ENCODE measurements at regions of chrX and their contacts with region 1.

Region 1: DNA sequence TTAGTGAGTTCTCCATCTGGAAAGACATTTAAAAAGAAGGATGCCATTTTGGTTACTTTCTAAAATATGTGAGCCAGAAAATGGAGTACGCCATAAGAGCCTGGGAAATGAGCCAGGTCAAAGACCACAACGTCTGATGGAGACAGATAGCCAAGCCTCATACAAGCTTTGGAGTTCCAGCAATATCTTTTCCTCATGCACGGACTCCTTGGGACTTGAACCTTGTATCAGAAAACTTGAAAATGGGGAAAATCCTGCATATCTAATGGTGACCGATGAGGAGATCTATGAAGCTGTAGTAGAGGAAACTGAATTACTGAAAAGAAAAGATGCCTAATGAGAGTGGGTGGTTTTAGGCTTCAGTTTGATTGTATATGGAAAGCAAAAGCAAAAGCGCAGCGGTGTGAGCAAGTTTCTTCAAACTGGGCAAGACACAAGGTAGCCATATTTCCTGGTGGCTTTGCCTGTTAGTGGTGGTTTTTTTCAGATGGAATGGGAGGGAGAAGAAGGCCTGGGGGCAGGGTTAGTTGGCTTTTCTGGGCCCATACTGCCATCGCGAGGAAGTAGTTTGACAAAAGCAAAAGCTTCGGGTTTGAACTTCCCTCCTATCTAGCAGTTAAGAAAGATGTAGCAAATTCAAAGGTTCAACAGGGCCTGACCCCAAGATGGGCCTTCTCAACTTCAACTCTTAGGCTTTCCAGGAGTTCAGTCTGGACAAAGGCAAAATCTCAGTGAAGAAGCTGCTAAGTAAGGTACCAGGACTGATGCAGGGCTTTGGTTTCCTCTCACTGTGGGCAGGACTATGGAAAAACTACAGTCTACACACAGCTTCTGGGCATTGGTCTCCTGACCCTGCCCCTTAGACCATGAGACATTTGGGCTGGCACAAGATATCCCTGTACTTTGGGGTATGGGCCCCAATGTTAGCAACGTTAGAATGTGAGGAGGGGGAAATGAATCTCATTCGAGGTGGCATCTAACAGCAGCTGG is 210.0 kb upstream of the STK26 start:
- DNase-seq: peak; percentile 22 to 71 (median 46)
- ATAC-seq: peak; percentile 91
- H3K4me3 ChIP-seq: peak overlapping the region; percentile 14; the same call in 1 of the 2 replicates
- H3K27ac ChIP-seq: peak overlapping the region; percentile 82
- H3K4me1 ChIP-seq: peaks cover 0 to 8% of the 10 kb centered on the region in 2 experiments; a peak in 2 of 5 replicates
- H3K27me3 ChIP-seq: no peaks in the 10 kb centered on the region
- CTCF ChIP-seq: peak; percentile 33 to 58 (median 38); a peak in 5 of 6 replicates
- EP300 ChIP-seq: no peak
- POLR2A ChIP-seq: no peak
- RAD21 ChIP-seq: peak; percentile 59 to 64

Region 2: GRCh38 chrX:130975947-130976346 is 837.2 kb before region 1 on chrX:
- CTCF ChIA-PET with region 1: no interaction called
- POLR2A ChIA-PET with region 1: no interaction called
- in situ Hi-C with region 1: no loop called
- intact Hi-C with region 1: loop called (anchors 10 kb)
- DNase-seq: peak; percentile 37 to 69 (median 44)
- ATAC-seq: peak; percentile 97
- H3K4me3 ChIP-seq: no peak overlapping the region
- H3K27ac ChIP-seq: no peak overlapping the region
- H3K4me1 ChIP-seq: no peaks in the 10 kb centered on the region; a peak in 1 of 5 replicates
- H3K27me3 ChIP-seq: no peaks in the 10 kb centered on the region
- CTCF ChIP-seq: peak; percentile 50 to 74 (median 65); a peak in 5 of 6 replicates
- EP300 ChIP-seq: no peak
- POLR2A ChIP-seq: no peak
- RAD21 ChIP-seq: peak; percentile 77 to 84

Region 3: DNA sequence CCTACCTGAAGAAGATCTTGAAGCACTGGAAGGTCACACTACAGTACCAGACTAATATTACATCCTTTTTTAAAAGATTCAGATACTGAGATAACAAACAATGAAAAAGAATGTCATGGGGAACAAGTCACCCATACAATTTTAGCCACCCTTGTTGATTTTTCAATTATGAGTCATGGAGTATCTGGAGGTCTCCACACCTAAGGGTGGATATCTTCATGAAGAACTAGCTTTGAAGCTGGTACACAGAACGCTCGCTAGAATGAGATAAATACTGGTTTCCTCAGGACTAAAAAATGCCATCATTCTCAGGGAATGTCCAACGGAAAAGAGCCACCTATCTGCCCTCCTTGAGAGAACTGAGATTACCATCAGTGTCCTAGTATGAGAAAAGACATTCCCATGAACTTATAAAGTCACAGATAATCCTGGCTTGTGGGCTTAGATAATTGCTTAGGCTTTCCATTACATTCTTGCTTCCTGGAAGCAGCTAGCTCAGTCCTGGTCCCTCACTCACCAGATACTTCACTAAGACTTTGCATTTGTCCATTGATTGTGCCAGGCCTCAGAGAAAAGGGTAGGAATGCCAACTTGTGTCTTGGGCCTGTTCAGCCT is 102.6 kb before region 1 on chrX:
- CTCF ChIA-PET with region 1: no interaction called
- POLR2A ChIA-PET with region 1: no interaction called
- in situ Hi-C with region 1: no loop called
- intact Hi-C with region 1: no loop called
- DNase-seq: no peak
- ATAC-seq: no peak
- H3K4me3 ChIP-seq: no peak overlapping the region
- H3K27ac ChIP-seq: no peak overlapping the region
- H3K4me1 ChIP-seq: no peaks in the 10 kb centered on the region
- H3K27me3 ChIP-seq: no peaks in the 10 kb centered on the region
- CTCF ChIP-seq: no peak
- EP300 ChIP-seq: no peak
- POLR2A ChIP-seq: no peak
- RAD21 ChIP-seq: no peak

Measured in K562 (cell line).